ENCODE measurements at regions of chr9 and their contacts with region 1.

Region 1: DNA sequence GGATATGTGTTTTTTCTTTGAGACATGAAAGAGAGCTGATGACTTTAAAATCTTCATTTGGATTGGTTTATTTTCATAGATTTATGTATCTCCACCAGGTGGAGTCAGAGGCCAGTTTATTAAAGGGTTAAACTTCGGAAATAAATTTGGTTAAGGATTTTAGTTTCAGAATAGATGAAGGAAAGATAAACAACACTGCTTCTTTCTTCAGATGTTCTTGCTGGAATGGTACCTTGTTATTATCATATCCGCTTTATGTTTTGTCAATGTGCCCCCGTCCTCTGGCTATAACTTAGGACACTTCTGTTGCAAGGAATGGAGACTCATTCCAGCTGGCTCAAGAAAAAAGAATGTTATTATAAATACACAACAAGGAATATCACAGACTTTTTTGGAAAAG is 81.2 kb downstream of the ALDH1A1 start:
- DNase-seq: peak; percentile 1
- H3K4me3 Mint-ChIP-seq: no peak overlapping the region
- H3K27ac Mint-ChIP-seq: no peak overlapping the region
- H3K4me1 Mint-ChIP-seq: peaks cover 6% of the 10 kb centered on the region
- H3K27me3 Mint-ChIP-seq: no peaks in the 10 kb centered on the region
- CTCF ChIP-seq: peak; percentile 51

Region 2: GRCh38 chr9:72960446-72960845 is 88.8 kb after region 1 on chr9:
- CTCF ChIA-PET with region 1: no interaction called
- intact Hi-C with region 1: loop called (anchors 2 kb)
- DNase-seq: no peak
- H3K4me3 Mint-ChIP-seq: no peak overlapping the region
- H3K27ac Mint-ChIP-seq: no peak overlapping the region
- H3K4me1 Mint-ChIP-seq: no peaks in the 10 kb centered on the region
- H3K27me3 Mint-ChIP-seq: no peaks in the 10 kb centered on the region
- CTCF ChIP-seq: no peak

Region 3: GRCh38 chr9:73923796-73924195 is 1052.1 kb after region 1 on chr9:
- CTCF ChIA-PET with region 1: no interaction called
- intact Hi-C with region 1: no loop called
- DNase-seq: no peak
- H3K4me3 Mint-ChIP-seq: no peak overlapping the region
- H3K27ac Mint-ChIP-seq: no peak overlapping the region
- H3K4me1 Mint-ChIP-seq: no peaks in the 10 kb centered on the region
- H3K27me3 Mint-ChIP-seq: no peaks in the 10 kb centered on the region
- CTCF ChIP-seq: no peak

Measured in Calu3 (cell line).